Mammary epithelial cell (primary cell): ENCODE measurements at regions of chr11 and their contacts with region 1.

Region 1: GRCh38 chr11:69888483-69889076 is 69.4 kb upstream of the FGF3 start:
- DNase-seq: peak; percentile 48
- H3K4me3 ChIP-seq: no peak overlapping the region
- H3K27ac ChIP-seq: no peak overlapping the region
- H3K4me1 ChIP-seq: no peaks in the 10 kb centered on the region
- H3K27me3 ChIP-seq: no peaks in the 10 kb centered on the region
- CTCF ChIP-seq: peak; percentile 94 to 99

Region 2: DNA sequence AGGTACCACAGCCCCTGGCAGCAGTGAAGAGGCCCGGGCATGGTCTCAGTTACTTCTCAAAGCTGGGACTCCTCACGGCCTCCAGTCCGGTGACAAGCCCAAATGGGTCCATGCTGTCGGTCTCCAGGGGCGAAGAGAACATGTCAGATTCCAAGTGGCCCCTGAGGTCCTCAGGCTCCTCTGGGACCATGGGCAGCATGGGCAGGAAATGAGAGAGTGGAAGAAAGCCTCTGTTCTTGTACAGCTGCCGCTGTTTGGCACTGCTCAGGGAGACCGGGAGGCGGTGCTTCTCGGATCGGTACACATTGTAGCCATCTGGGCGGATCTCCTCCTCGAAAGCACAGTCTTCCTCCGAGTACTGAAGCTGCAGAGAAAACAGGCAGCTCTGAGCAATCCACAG is 189.4 kb before region 1 on chr11:
- CTCF ChIA-PET with region 1: no interaction called
- dilution Hi-C with region 1: no loop called
- in situ Hi-C with region 1: loop called in 1 of 2 experiments (anchors 10 kb)
- intact Hi-C with region 1: loop called (anchors 1 kb)
- DNase-seq: no peak
- H3K4me3 ChIP-seq: no peak overlapping the region
- H3K27ac ChIP-seq: no peak overlapping the region
- H3K4me1 ChIP-seq: peaks cover 4% of the 10 kb centered on the region
- H3K27me3 ChIP-seq: peaks cover 8% of the 10 kb centered on the region
- CTCF ChIP-seq: no peak

Region 3: DNA sequence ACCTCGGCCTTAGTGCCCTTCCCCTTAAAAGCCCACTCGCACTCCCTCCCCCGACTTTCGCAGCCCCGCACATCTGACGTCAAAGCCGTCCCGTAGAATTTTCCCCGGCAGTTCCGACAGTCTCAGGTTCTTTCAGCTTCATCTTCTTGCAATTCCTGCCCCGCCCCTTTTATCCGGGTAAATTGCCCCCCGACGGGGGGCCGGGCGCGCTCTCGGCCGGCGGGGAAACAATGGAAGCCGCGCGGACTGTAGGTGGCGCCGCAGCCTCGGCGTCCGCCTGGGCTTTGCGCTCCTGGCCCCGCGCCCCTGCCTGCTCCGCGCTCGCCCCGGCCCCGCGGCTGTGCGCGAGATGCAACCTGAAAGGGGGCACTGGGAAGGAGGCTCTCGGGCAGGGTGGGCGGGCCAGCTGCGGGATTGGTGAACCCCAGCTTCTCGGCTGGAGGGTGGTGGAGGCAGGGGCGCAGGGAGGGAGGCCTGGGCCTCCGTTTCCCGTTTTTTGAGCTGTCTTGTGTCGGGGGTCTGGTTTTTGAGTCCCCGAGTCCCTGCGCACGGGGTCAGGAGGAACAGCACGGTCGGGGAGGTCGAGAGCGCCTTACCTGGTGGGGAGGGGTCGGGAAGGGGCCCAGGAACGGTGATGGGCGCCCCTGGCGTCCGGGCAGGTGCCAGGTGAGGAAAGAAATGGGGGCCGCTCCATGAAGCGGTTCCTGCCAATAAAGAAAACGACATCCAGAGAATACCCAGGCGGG is 183.9 kb before region 1 on chr11:
- CTCF ChIA-PET with region 1: no interaction called
- dilution Hi-C with region 1: no loop called
- in situ Hi-C with region 1: loop called in 1 of 2 experiments (anchors 10 kb)
- intact Hi-C with region 1: loop called (anchors 1 kb)
- DNase-seq: no peak
- H3K4me3 ChIP-seq: no peak overlapping the region
- H3K27ac ChIP-seq: no peak overlapping the region
- H3K4me1 ChIP-seq: peaks cover 19% of the 10 kb centered on the region
- H3K27me3 ChIP-seq: peaks cover 8% of the 10 kb centered on the region
- CTCF ChIP-seq: no peak

Region 4: DNA sequence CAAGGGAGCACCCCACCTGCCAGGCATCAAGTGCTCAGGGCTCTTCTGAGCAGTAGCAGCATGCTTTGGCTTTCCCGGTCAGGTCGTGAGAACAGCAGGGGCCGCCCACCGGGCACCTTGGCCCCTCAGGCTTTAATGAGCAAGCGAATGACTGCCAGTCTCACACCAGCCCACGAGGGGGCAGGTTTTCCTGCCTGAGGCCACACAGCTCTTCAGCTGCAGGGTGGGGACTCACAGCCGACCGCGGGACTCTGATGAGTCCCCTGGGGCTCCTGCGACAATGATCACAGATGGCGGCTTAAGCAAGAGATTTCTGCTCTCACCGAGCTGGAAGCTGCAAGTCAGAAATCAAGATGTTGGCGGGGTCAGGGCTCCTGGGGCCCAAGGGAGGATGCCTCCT is 170.4 kb before region 1 on chr11:
- CTCF ChIA-PET with region 1: no interaction called
- dilution Hi-C with region 1: no loop called
- in situ Hi-C with region 1: no loop called
- intact Hi-C with region 1: no loop called
- DNase-seq: no peak
- H3K4me3 ChIP-seq: no peak overlapping the region
- H3K27ac ChIP-seq: no peak overlapping the region
- H3K4me1 ChIP-seq: no peaks in the 10 kb centered on the region
- H3K27me3 ChIP-seq: peaks cover 2% of the 10 kb centered on the region
- CTCF ChIP-seq: peak; percentile 11 to 27